OCI-LY7 (cell line): ENCODE measurements at regions of chr9 and their contacts with region 1.

Region 1: GRCh38 chr9:127943731-127944144 is 6.1 kb upstream of the DPM2 start:
- DNase-seq: peak; percentile 87
- H3K4me3 ChIP-seq: no peak overlapping the region
- H3K27ac ChIP-seq: peak overlapping the region; percentile 45
- H3K4me1 ChIP-seq: peaks cover 23% of the 10 kb centered on the region
- CTCF ChIP-seq: peak; percentile 92

Region 2: GRCh38 chr9:127380479-127380878 is 563.3 kb before region 1 on chr9:
- CTCF ChIA-PET with region 1: no interaction called
- POLR2A ChIA-PET with region 1: no interaction called
- intact Hi-C with region 1: no loop called
- DNase-seq: peak; percentile 26
- H3K4me3 ChIP-seq: no peak overlapping the region
- H3K27ac ChIP-seq: no peak overlapping the region
- H3K4me1 ChIP-seq: no peaks in the 10 kb centered on the region
- CTCF ChIP-seq: no peak

Region 3: DNA sequence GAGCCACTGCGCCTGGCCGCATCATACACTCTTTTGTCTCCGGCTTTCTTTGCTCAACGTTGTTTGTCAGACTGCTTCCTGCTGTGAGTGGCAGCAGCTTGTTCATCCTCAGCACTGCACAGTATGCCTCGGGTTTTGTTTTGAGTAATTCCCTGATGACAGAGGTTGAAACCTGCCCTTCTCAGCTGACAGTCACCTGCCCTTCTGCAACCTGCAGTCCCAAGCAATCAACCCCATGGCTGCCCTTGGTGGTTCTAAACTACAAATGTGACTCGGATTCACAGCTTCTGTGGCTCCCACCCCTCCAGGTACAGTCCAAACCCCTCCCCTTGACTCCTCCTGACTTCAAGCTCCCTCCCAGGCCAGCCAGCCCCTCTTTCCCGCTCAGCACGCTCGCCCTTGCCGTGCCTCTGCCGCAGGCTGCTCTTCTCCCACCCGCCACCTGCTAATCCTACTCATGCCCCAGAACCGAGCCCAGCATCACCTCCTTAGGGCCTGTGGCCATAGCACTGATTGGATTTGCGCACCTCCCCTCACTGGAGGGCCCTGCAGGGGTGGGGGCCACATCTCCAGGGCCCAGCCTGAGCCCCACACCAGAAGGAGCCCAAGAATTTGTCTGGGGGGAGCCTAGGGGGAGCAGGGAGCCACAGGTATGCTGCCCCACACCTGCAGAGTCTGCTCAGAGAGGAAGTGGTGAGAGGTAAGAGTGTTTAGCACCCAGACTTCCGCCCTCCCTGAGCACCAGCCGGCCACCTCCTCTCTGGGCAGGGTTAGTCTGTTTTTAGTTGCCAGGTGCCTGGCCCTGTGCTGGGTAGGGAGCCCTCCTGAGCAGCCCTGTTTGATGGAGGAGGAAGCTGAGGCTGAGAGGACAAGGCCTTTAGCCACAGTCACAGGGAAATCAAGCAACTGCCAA is 26.9 kb after region 1 on chr9:
- CTCF ChIA-PET with region 1: no interaction called
- POLR2A ChIA-PET with region 1: no interaction called
- intact Hi-C with region 1: loop called (anchors 2 kb)
- DNase-seq: peak; percentile 91
- H3K4me3 ChIP-seq: peak overlapping the region; percentile 80
- H3K27ac ChIP-seq: peak overlapping the region; percentile 95
- H3K4me1 ChIP-seq: peaks cover 100% of the 10 kb centered on the region
- CTCF ChIP-seq: peak; percentile 23; the same call in 1 of the 2 replicates

Region 4: DNA sequence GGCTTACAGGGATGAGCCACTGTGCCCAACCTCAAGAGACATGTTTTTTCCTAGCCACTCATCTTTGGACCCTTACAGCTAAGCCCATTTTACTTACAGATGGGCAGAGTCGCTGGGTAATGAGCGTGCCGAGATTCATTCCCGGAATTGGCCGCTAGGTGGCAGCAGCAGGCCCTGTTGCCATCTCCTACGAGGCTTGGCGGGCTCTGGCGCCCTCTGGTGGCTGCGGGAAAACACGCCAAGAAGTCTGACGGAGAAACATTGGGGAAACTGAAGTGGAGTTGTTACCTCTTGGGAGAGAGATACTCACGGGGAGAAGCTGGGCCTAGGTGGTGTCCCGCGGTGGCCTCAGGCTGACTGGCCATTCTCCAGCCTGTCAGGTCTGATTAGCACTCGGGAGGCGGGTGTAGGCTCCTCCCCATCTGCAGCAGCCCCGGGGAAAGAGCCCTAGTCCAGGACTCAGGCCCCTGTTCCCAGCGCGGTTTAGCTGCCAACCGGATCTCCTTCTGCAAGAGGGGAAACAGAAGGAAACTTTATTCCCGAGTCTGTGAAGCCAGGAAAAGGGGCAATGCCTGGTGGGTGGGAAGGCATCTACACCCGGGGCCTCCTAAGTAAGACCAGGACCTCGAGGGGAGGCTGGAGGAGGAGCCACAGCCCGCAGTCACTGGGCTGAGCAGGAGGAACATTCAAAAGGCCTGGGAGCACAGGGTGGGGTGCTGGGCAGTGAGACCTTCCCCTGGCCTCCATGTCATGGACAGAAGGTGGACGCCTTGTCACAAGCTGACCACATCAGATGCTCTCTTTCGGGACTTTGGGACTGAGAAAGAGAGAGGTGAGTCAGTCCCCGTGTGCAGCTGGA is 174.1 kb after region 1 on chr9:
- CTCF ChIA-PET with region 1: no interaction called
- POLR2A ChIA-PET with region 1: no interaction called
- intact Hi-C with region 1: loop called (anchors 2 kb)
- DNase-seq: peak; percentile 92
- H3K4me3 ChIP-seq: no peak overlapping the region
- H3K27ac ChIP-seq: no peak overlapping the region
- H3K4me1 ChIP-seq: no peaks in the 10 kb centered on the region
- CTCF ChIP-seq: peak; percentile 100